ENCODE measurements at regions of chr7 and their contacts with region 1.

Region 1: GRCh38 chr7:97381815-97382554 is 264.5 kb downstream of the SDHAF3 start:
- DNase-seq: no peak
- H3K4me3 ChIP-seq: no peak overlapping the region
- H3K27ac ChIP-seq: no peak overlapping the region
- H3K4me1 ChIP-seq: no peaks in the 10 kb centered on the region
- H3K27me3 ChIP-seq: no peaks in the 10 kb centered on the region
- CTCF ChIP-seq: no peak

Region 2: GRCh38 chr7:97081521-97082300 is 300.3 kb before region 1 on chr7:
- CTCF ChIA-PET with region 1: no interaction called
- POLR2A ChIA-PET with region 1: no interaction called
- intact Hi-C with region 1: loop called (anchors 10 kb)
- DNase-seq: no peak
- H3K4me3 ChIP-seq: no peak overlapping the region
- H3K27ac ChIP-seq: no peak overlapping the region
- H3K4me1 ChIP-seq: no peaks in the 10 kb centered on the region
- H3K27me3 ChIP-seq: peaks cover 7% of the 10 kb centered on the region; the same call in 1 of the 2 replicates
- CTCF ChIP-seq: no peak

Region 3: GRCh38 chr7:97401398-97401797 is 19.4 kb after region 1 on chr7:
- CTCF ChIA-PET with region 1: interaction called, 10 read pairs
- POLR2A ChIA-PET with region 1: no interaction called
- intact Hi-C with region 1: no loop called
- DNase-seq: no peak
- H3K4me3 ChIP-seq: no peak overlapping the region
- H3K27ac ChIP-seq: no peak overlapping the region
- H3K4me1 ChIP-seq: no peaks in the 10 kb centered on the region
- H3K27me3 ChIP-seq: peaks cover 9% of the 10 kb centered on the region; the same call in 1 of the 2 replicates
- CTCF ChIP-seq: no peak

Measured in PC-9 (cell line).